Heart left ventricle (tissue), 16 donors: ENCODE measurements at regions of chr10 and their contacts with region 1.

Region 1: DNA sequence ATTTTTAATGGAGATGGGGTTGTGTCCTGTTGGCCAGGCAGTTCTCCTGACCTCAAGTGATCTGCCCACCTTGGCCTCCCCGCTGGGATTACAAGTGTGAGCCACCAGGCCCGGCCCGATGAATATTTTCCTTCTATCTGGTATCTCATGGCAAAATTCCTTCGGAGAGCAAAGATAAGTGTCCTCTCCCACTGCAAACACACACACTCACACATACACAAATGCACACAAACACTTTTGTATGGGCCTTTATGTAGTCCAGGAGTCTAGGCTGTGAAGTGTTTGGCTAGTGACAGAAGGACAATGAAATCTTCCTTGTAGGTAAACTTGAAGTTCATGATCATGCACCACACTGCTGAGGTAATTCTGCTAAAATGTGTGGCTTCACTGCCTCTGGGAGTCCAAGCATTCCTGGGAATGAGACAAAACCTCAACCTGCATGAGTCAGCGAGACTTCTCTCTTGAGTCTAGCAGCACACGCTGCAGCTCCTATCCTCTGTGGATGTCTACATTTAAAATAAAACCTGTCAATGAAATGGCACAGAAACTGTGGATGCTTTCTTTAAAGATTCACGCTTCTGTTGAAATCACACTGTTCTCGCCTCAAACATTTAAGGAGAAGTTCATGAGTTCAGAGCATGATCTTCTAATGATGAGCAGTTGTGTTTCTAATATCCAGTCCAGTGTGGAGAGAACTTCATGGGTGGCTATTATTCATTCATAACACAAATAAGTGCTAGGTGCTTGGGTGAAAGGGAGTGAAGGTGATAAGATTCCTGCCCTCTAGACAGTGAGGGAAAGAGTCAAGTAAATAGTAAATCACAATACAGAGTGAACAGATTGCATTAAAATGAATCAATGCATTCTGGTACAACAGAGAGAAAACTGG is 96.5 kb downstream of the NRP1 start:
- DNase-seq: no peak
- ATAC-seq: no peak
- H3K4me3 ChIP-seq: no peak overlapping the region
- H3K27ac ChIP-seq: peak overlapping the region in 2 of 12 donors; percentile 12 to 16
- H3K4me1 ChIP-seq: peaks cover 6 to 78% (median 55%) of the 10 kb centered on the region in 12 donors
- H3K27me3 ChIP-seq: no peaks in the 10 kb centered on the region
- CTCF ChIP-seq: no peak
- POLR2A ChIP-seq: no peak

Region 2: GRCh38 chr10:33204049-33204448 is 33.9 kb before region 1 on chr10:
- intact Hi-C with region 1: loop called in 2 of 10 experiments (anchors 5 to 10 kb)
- DNase-seq: no peak
- ATAC-seq: peak in 3 of 4 donors; percentile 44 to 62 (median 60)
- H3K4me3 ChIP-seq: no peak overlapping the region
- H3K27ac ChIP-seq: peak overlapping the region in 2 of 12 donors; percentile 10 to 27
- H3K4me1 ChIP-seq: peaks cover 0 to 21% (median 4%) of the 10 kb centered on the region in 12 donors
- H3K27me3 ChIP-seq: no peaks in the 10 kb centered on the region
- CTCF ChIP-seq: no peak
- POLR2A ChIP-seq: no peak

Region 3: GRCh38 chr10:33216661-33217427 is 21.1 kb before region 1 on chr10:
- intact Hi-C with region 1: loop called in 1 of 10 experiments (anchors 2 kb)
- DNase-seq: no peak
- ATAC-seq: no peak
- H3K4me3 ChIP-seq: no peak overlapping the region
- H3K27ac ChIP-seq: peak overlapping the region in 9 of 12 donors; percentile 44 to 84 (median 57)
- H3K4me1 ChIP-seq: peaks cover 0 to 83% (median 35%) of the 10 kb centered on the region in 12 donors
- H3K27me3 ChIP-seq: no peaks in the 10 kb centered on the region
- CTCF ChIP-seq: no peak
- POLR2A ChIP-seq: no peak